HepG2 (cell line): ENCODE measurements at regions of chr6 and their contacts with region 1.

Region 1: GRCh38 chr6:31639449-31639861 is 13.0 kb downstream of the BAG6 start:
- DNase-seq: no peak
- ATAC-seq: peak; percentile 4
- H3K4me3 ChIP-seq: no peak overlapping the region
- H3K27ac ChIP-seq: no peak overlapping the region
- H3K4me1 ChIP-seq: peaks cover 18% of the 10 kb centered on the region
- H3K27me3 ChIP-seq: no peaks in the 10 kb centered on the region
- CTCF ChIP-seq: no peak
- EP300 ChIP-seq: no peak
- POLR2A ChIP-seq: no peak; a peak in 1 of 4 replicates
- RAD21 ChIP-seq: no peak

Region 2: GRCh38 chr6:31619805-31620585 is 19.5 kb before region 1 on chr6:
- CTCF ChIA-PET with region 1: no interaction called
- POLR2A ChIA-PET with region 1: interaction called, 30 read pairs
- in situ Hi-C with region 1: no loop called
- intact Hi-C with region 1: no loop called
- DNase-seq: peak; percentile 99
- ATAC-seq: peak; percentile 90
- H3K4me3 ChIP-seq: peak overlapping the region; percentile 63 to 92 (median 75)
- H3K27ac ChIP-seq: peak overlapping the region; percentile 98
- H3K4me1 ChIP-seq: peaks cover 36% of the 10 kb centered on the region
- H3K27me3 ChIP-seq: no peaks in the 10 kb centered on the region; a peak in 1 of 5 replicates
- CTCF ChIP-seq: no peak
- EP300 ChIP-seq: no peak; a peak in 1 of 4 replicates
- POLR2A ChIP-seq: peak; percentile 81 to 85
- RAD21 ChIP-seq: peak; percentile 34; the same call in 1 of the 2 replicates

Region 3: DNA sequence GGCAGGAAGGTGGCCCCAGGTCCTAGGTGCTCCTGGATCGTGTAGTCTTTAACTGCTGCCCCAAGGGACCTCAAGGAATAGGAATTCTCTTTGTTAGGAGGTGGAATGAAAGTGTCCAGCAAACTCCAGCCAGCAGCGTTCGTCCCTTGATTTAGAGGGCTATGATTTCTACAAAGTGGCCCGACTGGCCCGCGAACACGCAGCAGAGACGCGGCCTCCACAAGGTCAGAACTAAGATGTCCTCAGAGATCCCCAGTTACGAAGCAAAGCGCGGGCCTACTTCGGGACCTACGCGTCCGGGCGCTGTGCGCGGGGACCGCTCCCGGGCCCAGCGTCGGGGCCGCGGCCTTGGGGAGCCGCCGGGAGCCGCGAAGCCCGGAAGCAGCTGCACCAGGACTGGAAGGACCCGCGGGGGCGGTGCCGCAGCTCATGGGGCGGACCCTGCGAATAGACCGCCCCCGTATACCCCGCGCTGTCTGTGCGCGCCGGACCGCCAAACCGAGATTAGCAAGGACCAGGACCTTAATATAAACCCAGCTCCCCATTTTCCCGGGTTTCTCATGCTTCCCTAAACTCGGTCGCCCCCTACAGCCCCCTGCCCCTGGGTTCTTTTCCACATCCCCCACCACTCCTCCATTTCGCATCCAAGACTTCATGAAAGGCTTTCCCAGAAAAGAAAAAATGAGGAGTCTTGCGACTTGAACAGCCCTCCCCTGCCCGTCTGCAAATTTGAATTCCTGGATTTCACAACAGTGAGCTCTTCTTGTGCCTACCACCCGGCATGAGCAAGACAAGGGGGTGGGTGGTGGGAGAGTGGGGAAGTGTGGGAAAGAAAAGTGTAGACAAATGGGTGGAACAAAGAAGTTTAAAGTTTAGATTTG is 21.2 kb after region 1 on chr6 and contains the start of gene C6orf47:
- CTCF ChIA-PET with region 1: no interaction called
- POLR2A ChIA-PET with region 1: interaction called, 104 read pairs
- in situ Hi-C with region 1: no loop called
- intact Hi-C with region 1: no loop called
- DNase-seq: peak; percentile 79
- ATAC-seq: peak; percentile 66
- H3K4me3 ChIP-seq: peak within 1 kb of the TSS; percentile 56 to 78 (median 68)
- H3K27ac ChIP-seq: peak within 1 kb of the TSS; percentile 73
- H3K4me1 ChIP-seq: peaks cover 86% of the 10 kb centered on the region
- H3K27me3 ChIP-seq: no peaks in the 10 kb centered on the region; a peak in 1 of 5 replicates
- CTCF ChIP-seq: no peak; the same call in 1 of the 2 replicates
- EP300 ChIP-seq: no peak
- POLR2A ChIP-seq: peak in 1 of 2 experiments; percentile 59; a peak in 1 of 4 replicates
- RAD21 ChIP-seq: peak; percentile 36; the same call in 1 of the 2 replicates
- total RNA-seq, gene C6orf47: 15.5 and 18.1 TPM in 2 replicates

Region 4: DNA sequence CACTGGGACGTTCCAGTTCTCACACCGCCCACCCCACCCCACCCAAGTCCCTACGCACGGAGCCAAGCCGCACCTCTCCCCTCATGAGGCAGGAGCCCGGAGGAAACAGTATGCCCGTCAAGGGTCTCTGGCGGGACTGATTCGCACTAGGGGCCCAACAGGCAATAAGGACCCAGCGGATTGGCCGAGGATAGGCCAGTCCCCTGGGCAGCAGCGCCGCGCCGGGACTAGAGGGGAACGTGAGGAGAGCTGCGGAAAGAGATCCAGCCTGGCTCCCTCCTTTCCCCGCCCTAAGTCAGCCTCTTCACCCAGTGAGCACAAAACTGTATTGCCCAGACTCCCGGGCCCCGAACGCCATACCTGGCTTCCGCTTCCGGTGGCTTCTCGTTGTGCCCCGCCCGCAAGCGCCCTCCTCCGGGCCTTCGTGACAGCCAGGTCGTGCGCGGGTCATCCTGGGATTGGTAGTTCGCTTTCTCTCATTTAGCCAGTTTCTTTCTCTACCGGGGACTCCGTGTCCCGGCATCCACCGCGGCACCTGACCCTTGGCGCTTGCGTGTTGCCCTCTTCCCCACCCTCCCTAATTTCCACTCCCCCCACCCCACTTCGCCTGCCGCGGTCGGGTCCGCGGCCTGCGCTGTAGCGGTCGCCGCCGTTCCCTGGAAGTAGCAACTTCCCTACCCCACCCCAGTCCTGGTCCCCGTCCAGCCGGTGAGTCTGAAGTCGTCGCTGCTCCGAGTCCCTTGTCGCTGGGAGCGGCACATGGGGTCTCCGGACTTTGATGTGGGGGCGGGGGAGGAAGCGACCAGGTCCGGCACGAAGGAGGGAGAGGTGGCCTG is 26.3 kb after region 1 on chr6 and contains the start of gene CSNK2B:
- CTCF ChIA-PET with region 1: no interaction called
- POLR2A ChIA-PET with region 1: interaction called, 57 read pairs
- in situ Hi-C with region 1: no loop called
- intact Hi-C with region 1: no loop called
- DNase-seq: peak; percentile 99
- ATAC-seq: peak; percentile 83
- H3K4me3 ChIP-seq: peak within 1 kb of the TSS; percentile 93 to 98 (median 94)
- H3K27ac ChIP-seq: peak within 1 kb of the TSS; percentile 99
- H3K4me1 ChIP-seq: peaks cover 71% of the 10 kb centered on the region
- H3K27me3 ChIP-seq: no peaks in the 10 kb centered on the region; a peak in 1 of 5 replicates
- CTCF ChIP-seq: peak; percentile 21
- EP300 ChIP-seq: 0 out of 4 replicates have a peak, but pooled peaks of 1 of the 2 experiments have one; percentile 1
- POLR2A ChIP-seq: peak in 1 of 2 experiments; percentile 98; a peak in 2 of 4 replicates
- RAD21 ChIP-seq: peak; percentile 8; the same call in 1 of the 2 replicates
- total RNA-seq, gene CSNK2B: 296 and 316 TPM in 2 replicates